Heart right ventricle (tissue), 16 donors: ENCODE measurements at regions of chr11 and their contacts with region 1.

Region 1: GRCh38 chr11:60363542-60364510 is 14.5 kb upstream of the MS4A7 start:
- DNase-seq: peak in 1 of 2 donors; percentile 50
- ATAC-seq: peak in 7 of 8 donors; percentile 64 to 85 (median 79)
- H3K4me3 ChIP-seq: peak overlapping the region in 1 of 10 donors; percentile 25
- H3K27ac ChIP-seq: peak overlapping the region in 2 of 10 donors; percentile 35 to 80
- H3K4me1 ChIP-seq: peaks cover 0 to 17% (median 0%) of the 10 kb centered on the region in 9 donors
- H3K27me3 ChIP-seq: peaks cover 0 to 33% (median 3%) of the 10 kb centered on the region in 7 donors
- CTCF ChIP-seq: peak; percentile 49 to 81 (median 72)

Region 2: GRCh38 chr11:60615497-60615896 is 251.7 kb after region 1 on chr11:
- intact Hi-C with region 1: loop called in 8 of 10 experiments (anchors 5 to 10 kb)
- DNase-seq: no peak
- ATAC-seq: no peak
- H3K4me3 ChIP-seq: no peak overlapping the region
- H3K27ac ChIP-seq: no peak overlapping the region
- H3K4me1 ChIP-seq: no peaks in the 10 kb centered on the region
- H3K27me3 ChIP-seq: peaks cover 0 to 27% (median 0%) of the 10 kb centered on the region in 7 donors
- CTCF ChIP-seq: no peak